ENCODE measurements at regions of chr10 and their contacts with region 1.

Region 1: DNA sequence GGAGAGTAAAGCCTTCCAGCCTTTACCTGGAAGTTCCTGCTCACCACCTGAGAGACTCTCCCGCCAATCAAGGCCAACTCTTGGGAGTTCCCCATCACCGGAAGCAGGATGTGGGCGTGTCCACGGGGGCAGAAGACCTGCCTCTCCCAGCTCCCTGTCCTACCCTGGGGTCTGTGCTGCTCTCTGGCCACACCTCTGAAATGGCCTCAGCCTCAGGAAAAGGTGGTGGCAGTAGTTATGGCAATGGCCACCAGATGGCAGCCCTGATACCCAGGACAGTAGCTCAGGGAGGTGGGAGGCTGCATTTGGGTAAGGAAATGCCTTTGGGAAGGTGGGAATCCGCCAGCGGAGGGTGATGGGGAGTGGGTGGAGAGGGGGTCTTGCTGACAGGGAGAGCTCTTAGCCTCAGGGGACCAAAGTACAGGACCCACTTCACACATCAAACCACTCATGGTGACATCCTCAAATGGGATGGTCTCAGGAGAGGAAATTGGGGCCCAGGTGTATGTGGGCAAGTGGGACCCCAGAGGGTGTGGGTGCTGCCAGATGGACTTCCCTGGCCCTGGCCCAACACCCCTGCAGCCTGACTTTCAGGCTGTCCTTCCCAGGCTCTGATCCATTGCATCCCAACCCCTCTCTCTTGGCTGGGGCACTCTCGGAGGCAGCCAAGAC is 33.9 kb downstream of the KAZALD1 start:
- DNase-seq: peak; percentile 99
- ATAC-seq: peak; percentile 99
- H3K4me3 Mint-ChIP-seq: no peak overlapping the region
- H3K27ac Mint-ChIP-seq: no peak overlapping the region
- H3K4me1 Mint-ChIP-seq: peaks cover 22% of the 10 kb centered on the region
- H3K27me3 Mint-ChIP-seq: peaks cover 12% of the 10 kb centered on the region
- CTCF ChIP-seq: peak; percentile 64

Region 2: GRCh38 chr10:101003499-101004224 is 92.0 kb before region 1 on chr10:
- CTCF ChIA-PET with region 1: no interaction called
- POLR2A ChIA-PET with region 1: no interaction called
- DNase-seq: no peak
- ATAC-seq: no peak
- H3K4me3 Mint-ChIP-seq: no peak overlapping the region
- H3K27ac Mint-ChIP-seq: no peak overlapping the region
- H3K4me1 Mint-ChIP-seq: peaks cover 17% of the 10 kb centered on the region
- H3K27me3 Mint-ChIP-seq: no peaks in the 10 kb centered on the region
- CTCF ChIP-seq: no peak

Region 3: DNA sequence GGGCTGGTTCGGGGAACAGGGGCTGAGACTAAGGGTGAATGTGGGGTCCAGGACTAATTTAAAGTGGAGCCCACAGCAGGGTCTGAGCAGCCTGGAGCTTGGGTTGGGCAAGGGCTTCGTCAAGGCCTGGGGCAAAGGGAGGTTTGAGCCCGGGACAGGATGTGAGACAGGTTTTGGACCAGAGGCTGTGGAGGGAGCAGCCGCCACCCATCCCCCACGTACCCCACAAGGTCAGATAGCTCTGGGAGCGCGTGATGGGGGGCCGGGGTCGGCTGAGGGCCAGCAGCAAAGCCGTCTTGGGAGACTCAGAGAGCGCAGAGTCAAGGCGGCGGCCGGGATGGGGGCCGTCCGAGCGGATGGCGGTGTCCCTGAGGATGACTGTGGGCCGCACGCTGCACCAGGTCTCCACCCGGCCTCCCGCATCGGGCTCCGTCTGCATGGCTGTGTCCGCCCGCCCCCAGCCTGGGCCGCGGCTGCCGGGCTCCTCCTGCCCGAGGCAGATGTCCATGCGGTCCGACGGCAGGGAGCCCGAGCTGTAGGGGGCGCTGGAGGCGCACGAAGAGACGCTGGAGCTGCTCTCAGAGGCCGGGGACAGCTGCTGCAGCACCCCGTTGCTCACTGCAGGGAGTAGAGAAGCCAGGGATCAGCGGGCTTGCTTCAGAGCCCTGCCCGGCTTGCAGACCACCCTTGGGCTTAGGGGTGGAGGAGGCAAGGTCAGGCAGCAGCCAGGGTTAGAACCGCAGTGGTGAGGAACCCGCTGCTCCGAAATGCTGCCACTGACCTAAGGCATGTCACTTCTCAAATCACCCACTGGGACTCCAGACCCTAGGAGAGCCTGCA is 76.9 kb before region 1 on chr10:
- CTCF ChIA-PET with region 1: interaction called, 15 read pairs
- POLR2A ChIA-PET with region 1: no interaction called
- DNase-seq: peak; percentile 95
- ATAC-seq: peak; percentile 77
- H3K4me3 Mint-ChIP-seq: peak overlapping the region; percentile 73
- H3K27ac Mint-ChIP-seq: no peak overlapping the region
- H3K4me1 Mint-ChIP-seq: peaks cover 15% of the 10 kb centered on the region
- H3K27me3 Mint-ChIP-seq: peaks cover 64% of the 10 kb centered on the region
- CTCF ChIP-seq: peak; percentile 70

Region 4: DNA sequence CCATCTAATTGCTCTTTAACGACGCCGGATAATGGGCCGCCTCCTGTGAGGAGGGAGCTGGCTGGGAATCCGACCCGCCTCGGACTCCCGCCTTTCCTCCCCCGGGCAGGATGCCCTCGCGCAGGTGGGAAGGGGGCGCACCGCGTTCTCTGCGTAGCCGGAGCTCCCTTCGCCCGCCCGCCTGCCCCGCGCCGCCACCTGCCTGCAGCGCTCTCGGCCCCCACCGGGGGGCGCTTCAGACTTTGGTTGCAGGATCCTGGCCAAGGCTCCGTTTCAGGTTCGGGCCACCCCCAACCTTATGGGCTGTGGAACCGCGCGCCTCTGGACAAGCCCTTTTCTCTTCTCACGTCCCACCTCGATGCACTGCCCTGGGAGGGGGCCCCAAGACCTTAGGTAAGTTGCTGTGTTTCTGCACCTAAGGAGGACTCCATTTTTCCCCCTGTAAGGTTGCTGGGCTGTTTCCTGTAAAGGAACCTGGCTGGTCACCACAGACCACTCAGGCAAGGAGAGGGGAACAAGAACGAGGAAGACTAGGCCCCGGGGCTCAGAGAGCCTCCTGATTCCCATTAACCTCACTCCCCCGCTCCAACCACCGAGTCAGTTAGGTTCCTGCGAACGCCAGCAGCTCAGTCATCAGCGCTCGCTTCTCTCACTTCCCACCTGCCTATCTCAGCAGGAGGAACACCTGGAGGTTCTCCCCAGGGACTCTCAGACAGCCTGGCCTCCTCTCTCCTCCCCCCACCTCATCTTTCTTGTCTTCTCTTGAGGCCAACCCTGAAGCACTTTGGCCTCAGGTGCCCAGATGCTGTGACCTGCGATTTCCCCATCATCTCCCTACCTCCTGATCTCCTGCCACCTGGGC is 45.2 kb before region 1 on chr10:
- CTCF ChIA-PET with region 1: interaction called, 140 read pairs
- POLR2A ChIA-PET with region 1: interaction called, 3 read pairs
- DNase-seq: peak; percentile 95
- ATAC-seq: peak; percentile 68
- H3K4me3 Mint-ChIP-seq: peak overlapping the region; percentile 60
- H3K27ac Mint-ChIP-seq: no peak overlapping the region
- H3K4me1 Mint-ChIP-seq: peaks cover 41% of the 10 kb centered on the region
- H3K27me3 Mint-ChIP-seq: peaks cover 67% of the 10 kb centered on the region
- CTCF ChIP-seq: peak; percentile 86

Region 5: DNA sequence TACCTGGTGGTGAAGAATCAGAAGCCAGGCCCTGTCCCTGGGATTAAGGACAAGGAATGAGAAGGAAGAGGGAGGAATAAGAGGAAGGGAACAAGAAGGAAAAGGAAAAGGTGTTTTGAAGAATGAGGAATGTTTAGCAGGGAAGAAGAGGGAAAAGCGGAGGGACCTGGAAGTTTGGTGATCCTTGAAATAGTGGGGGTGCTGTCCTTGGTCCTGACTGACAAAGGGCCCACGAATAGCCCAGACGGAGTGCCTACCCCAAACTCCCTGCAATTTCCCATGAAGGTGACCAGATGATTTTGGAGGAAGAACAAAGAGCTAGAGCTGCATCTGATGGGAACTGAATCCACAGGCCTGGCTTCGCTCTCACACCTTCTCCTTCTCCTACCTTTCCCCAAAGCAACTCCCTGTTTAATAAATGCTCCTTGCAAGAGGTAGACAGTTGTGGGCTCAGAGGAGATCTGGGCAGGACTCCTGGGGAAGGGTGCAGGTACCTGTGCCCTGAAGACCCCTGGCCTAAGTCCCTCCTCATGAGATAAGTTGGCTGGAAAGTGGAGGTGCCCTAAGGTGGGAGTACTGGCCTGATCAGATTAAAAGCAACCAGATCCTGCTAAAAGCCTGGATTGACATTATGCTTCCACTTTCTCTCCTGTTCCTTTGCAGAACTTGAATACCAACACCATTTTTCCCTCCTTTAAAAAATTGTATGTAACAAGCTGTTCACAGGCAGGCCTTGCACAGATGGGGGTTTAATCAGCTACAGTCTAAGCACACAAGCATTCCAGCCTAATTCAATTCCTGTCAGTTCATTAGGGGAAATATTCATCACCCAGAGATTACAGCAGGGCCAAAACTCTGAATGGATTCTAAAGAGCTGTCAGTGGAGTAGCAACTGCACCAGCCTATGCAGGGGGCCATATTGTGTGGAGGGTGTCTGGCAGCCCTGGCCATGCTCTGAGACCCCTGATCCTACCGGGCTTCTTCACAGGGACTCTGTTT is 14.4 kb before region 1 on chr10:
- CTCF ChIA-PET with region 1: interaction called, 84 read pairs
- POLR2A ChIA-PET with region 1: no interaction called
- DNase-seq: peak; percentile 66
- ATAC-seq: peak; percentile 75
- H3K4me3 Mint-ChIP-seq: no peak overlapping the region
- H3K27ac Mint-ChIP-seq: no peak overlapping the region
- H3K4me1 Mint-ChIP-seq: peaks cover 3% of the 10 kb centered on the region
- H3K27me3 Mint-ChIP-seq: peaks cover 64% of the 10 kb centered on the region
- CTCF ChIP-seq: no peak

Region 6: DNA sequence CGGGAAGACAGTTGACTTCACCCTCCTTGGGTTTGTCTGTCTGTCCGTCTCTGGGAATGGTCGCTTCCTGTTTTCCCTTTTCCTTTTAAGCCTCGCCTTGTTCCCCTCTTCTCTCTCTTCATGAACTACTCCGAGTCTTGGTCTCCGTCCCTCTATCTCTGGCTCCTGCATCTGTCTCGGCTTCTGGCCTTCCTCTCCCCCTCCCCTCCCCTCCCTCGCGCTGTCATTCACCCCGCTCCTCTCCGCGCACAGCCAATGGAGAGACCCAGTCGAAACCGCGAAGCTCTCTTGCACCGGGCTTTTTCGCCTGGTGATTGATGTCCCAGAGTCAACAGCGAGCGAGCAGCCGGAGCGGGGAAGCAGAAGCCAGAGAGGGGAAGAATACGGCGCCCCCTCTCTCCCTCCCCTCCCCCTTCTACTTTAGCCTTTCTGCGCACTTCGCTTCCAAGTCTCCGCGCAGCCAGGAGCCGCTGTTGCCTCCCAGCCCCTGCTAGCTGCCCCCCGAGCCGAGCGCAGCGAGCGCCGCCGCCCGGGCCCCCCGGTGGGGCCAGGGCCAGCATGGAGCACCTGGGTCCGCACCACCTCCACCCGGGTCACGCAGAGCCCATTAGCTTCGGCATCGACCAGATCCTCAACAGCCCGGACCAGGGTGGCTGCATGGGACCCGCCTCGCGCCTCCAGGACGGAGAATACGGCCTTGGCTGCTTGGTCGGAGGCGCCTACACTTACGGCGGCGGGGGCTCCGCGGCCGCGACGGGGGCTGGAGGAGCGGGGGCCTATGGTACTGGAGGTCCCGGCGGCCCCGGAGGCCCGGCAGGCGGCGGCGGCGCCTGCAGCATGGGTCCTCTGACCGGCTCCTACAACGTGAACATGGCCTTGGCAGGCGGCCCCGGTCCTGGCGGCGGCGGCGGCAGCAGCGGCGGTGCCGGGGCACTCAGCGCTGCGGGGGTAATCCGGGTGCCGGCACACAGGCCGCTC is 35.6 kb after region 1 on chr10 and contains the start of gene TLX1:
- CTCF ChIA-PET with region 1: interaction called, 219 read pairs
- POLR2A ChIA-PET with region 1: interaction called, 3 read pairs
- DNase-seq: peak; percentile 74
- ATAC-seq: peak; percentile 46
- H3K4me3 Mint-ChIP-seq: peak within 1 kb of the TSS; percentile 59
- H3K27ac Mint-ChIP-seq: no peak within 1 kb of the TSS
- H3K4me1 Mint-ChIP-seq: peaks cover 39% of the 10 kb centered on the region
- H3K27me3 Mint-ChIP-seq: peaks cover 98% of the 10 kb centered on the region
- CTCF ChIP-seq: no peak
- total RNA-seq, gene TLX1: 2.1 to 4.6 TPM (median 2.3 TPM) in 3 replicates

Region 7: DNA sequence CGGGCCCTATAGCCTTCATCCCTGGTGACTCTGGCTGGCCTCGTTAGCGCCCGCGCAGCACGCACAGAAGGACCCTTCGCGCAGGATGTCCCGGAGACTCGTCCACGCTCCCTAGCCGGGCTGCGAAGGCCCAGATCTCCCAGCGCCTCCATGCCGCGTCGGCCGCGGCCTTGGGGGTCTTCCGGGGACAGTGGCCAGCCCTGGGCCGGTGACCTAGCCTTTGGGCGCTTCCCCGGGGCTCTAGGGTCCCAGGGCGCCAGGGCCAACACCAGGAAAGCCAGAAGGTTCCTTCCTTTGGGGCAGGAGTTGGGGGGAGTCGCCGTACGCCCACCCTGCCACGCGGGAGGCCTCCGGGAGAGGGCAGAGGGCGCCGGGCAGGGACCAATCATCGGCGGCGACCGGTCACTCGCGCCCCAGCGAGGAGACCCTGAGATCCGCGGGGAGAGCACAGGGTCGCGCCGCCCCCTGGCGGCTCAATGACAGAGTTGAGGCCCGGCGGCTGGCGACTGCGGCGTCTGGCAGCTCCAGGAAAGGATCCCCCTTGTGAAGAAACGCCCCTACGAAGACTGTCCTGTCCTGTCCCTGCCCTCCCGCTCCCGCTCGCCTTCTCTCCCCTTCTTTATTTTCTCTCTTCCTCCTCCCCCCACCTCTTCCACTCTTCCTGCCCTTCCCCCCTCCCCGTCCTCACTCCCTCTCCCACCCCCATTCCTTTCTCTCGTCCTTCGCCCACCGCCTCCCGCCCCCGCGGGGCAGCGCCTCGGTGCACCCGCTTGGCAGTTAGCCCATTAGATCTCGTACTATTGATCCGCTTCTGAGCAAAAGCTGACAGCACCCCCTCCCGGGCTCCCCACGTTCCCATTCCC is 195.9 kb after region 1 on chr10:
- CTCF ChIA-PET with region 1: interaction called, 10 read pairs
- POLR2A ChIA-PET with region 1: no interaction called
- DNase-seq: peak; percentile 87
- ATAC-seq: peak; percentile 65
- H3K4me3 Mint-ChIP-seq: peak overlapping the region; percentile 80
- H3K27ac Mint-ChIP-seq: no peak overlapping the region
- H3K4me1 Mint-ChIP-seq: peaks cover 39% of the 10 kb centered on the region
- H3K27me3 Mint-ChIP-seq: peaks cover 97% of the 10 kb centered on the region
- CTCF ChIP-seq: peak; percentile 80

Measured in WTC11 (cell line).